ENCODE measurements at regions of chr20 and their contacts with region 1.

Region 1: GRCh38 chr20:44109951-44110361 is 77.0 kb downstream of the JPH2 start:
- DNase-seq: no peak
- ATAC-seq: peak in 2 of 4 donors; percentile 11 to 31
- H3K4me3 ChIP-seq: no peak overlapping the region
- H3K27ac ChIP-seq: no peak overlapping the region
- H3K4me1 ChIP-seq: peaks cover 4% of the 10 kb centered on the region
- H3K27me3 ChIP-seq: no peaks in the 10 kb centered on the region
- CTCF ChIP-seq: no peak

Region 2: DNA sequence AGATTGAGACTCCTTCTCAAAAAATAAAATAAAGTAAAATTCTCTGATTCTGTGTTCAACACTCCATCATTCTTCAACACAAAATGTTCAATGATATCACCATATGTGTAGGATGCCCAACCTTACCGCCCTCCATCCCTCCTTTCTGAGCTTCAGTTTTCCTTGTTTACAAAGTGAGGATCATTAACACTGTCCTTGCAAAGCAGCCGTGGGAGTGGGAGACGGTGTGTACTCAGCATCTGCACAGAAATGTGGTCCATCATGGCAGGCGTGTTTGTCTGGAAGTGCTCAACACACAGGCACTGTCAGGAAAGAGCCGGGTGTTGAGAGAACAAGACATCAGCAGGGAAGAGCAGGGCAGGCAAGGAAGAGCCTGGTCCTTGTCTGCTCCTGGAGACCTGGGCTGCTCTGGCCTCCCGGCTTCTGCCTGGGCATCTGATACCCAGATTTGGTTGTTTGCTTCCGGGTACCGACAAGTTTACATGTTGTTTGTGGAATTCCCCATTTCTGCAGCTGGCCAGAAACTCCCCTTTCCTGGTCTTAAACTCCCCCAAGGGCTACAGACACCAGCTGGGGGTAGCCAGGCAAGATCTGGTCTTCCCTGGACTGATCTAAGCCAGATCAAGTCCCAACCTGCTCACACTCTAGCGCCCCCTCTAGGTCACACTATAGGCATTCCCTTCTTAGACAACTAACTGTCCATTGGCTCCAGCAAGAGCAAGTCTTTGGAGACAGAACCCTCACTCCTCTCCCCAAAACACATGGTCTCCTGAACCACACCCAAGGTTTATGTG is 339.0 kb after region 1 on chr20:
- intact Hi-C with region 1: no loop called
- DNase-seq: no peak
- ATAC-seq: no peak
- H3K4me3 ChIP-seq: no peak overlapping the region
- H3K27ac ChIP-seq: no peak overlapping the region
- H3K4me1 ChIP-seq: no peaks in the 10 kb centered on the region
- H3K27me3 ChIP-seq: no peaks in the 10 kb centered on the region
- CTCF ChIP-seq: no peak

Region 3: DNA sequence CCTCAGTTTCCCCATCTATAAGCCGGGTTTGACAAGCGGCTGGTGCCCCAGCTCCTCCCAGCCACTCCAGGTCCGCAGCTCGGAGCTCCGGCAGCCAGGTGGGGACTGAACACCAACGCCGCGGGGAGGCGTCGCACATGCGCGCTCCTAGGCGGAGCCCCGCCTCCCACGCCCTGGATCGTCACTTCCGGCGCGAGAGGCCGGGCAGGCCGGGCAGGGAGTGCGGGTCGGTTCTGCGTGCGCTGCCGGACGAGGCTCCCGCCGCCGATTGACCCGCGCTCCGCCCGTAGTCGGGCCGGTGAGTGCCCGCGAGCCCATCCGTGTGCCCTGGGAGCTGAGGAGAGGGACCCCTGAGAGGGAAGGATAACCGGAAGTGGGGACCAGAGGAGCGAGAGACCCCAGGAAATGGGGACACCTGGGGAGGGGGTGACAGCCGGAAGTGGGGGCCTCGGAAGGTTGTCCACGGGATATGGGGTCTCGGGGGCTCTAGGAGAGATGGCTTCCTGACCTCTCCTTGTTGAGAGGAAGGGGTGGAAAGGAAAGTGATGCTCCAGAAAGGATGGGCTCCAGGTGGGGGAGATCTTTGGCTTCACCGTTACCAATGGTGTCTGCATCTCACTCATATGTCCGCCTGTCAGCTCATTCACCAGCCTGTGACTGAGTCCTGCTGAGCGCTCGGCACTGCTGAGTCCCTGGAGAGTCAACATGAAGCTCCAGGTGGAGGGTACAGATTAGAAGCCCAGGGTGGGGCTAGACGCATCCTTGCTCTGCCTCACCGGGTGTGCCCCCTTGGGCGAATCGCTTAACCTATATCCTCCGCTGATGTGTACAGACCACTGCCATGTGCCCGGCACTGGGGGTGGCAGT is 366.0 kb after region 1 on chr20 and contains the start of gene TTPAL:
- intact Hi-C with region 1: loop called in 1 of 2 experiments (anchors 10 kb)
- DNase-seq: peak; percentile 90 to 93
- ATAC-seq: peak; percentile 96 to 98 (median 98)
- H3K4me3 ChIP-seq: peak within 1 kb of the TSS; percentile 90
- H3K27ac ChIP-seq: peak within 1 kb of the TSS; percentile 95
- H3K4me1 ChIP-seq: peaks cover 18% of the 10 kb centered on the region
- H3K27me3 ChIP-seq: no peaks in the 10 kb centered on the region
- CTCF ChIP-seq: peak; percentile 41
- total RNA-seq, gene TTPAL: 3.2 to 8.4 (median 5.4) TPM

Measured in psoas muscle (tissue), 8 donors.